GM10248 (cell line): ENCODE measurements at regions of chr17 and their contacts with region 1.

Region 1: DNA sequence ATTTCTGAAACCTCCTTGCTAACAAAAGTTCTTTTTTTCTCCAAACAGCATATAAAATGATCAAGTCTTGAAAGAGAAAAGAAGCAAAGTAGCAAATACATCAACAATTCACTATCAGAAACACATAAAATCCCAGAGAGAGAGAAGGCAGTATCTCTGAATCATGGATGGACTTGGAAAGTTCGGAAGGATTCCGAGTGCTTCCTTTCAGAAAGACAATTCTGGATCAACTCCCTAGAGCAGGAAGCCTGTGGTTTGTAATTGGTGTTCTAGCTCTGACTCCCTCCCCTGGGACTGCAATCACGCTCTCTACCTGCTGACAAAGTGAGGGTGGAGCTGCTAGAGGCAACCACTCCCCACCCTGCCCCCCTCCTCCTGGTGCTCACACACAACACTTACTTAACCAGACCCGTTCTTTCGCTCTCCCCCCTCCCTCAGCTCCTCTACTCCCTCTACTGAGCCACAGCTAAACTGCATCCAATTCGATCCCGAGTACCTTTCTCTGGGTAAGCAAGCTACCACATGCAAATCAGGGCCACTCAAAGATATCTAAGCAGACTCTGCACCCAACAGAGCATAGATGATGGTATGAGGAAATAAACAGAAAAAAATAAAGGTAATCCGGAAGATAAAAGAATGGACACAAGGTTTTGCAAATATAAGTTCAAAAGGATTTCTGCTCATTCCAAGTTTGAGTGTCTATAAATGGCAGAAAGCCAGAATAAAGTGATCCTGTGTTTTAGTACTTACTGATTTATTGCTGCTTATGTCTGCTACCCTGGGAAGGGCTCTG is at the start of gene RNF43:
- DNase-seq: peak; percentile 92
- CTCF ChIP-seq: peak; percentile 79

Region 2: GRCh38 chr17:58317421-58318064 is 100.0 kb before region 1 on chr17:
- CTCF ChIA-PET with region 1: interaction called, 93 read pairs
- POLR2A ChIA-PET with region 1: interaction called, 4 read pairs
- DNase-seq: peak; percentile 79
- CTCF ChIP-seq: peak; percentile 77

Region 3: DNA sequence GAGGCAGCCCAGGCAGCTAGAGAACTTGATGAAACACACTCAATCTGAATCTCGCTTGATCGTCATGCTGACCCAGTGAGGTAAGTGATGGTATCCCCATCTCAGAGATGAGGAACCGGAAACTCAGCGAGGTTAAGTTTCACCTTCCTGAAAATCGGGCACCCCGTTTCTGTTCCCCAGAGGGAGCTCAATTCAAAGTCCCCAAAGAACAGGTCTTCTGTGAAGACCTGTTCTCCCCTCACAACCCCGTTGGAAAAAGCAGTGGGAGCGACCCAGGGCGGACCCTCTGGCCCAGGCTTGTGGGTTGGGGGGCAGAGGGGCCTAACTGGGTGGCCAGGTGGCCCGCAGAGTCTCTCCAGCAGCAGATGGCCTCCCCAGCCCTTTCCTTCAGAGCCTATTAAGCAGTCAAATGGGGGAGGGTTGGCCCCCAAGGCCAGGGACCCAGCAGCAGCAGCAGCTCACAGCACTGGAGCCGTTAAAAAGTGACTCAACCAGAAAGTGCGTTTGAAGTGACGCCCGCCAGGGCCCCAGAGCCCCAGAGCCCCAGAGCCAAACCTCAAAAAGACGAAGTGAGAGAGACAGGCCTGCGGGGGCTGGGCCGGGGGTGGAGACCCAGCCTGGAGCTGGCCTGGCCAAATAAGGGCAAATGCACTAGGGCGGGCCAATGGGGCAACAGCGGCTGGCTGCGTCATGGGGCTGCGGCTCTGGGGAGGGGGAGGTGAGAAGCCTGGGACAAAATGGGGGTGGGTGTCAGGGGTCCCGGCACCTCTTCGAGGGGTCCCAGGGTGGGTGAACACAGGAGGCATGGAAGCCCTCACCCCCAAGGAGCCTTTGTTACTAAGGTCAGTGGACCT is 79.7 kb before region 1 on chr17:
- CTCF ChIA-PET with region 1: interaction called, 11 read pairs
- POLR2A ChIA-PET with region 1: interaction called, 8 read pairs
- DNase-seq: peak; percentile 82
- CTCF ChIP-seq: no peak

Region 4: GRCh38 chr17:58369214-58370031 is 48.1 kb before region 1 on chr17:
- CTCF ChIA-PET with region 1: interaction called, 16 read pairs
- POLR2A ChIA-PET with region 1: interaction called, 4 read pairs
- DNase-seq: peak; percentile 48
- CTCF ChIP-seq: no peak

Region 5: GRCh38 chr17:58388302-58389168 is 29.0 kb before region 1 on chr17:
- CTCF ChIA-PET with region 1: interaction called, 15 read pairs
- POLR2A ChIA-PET with region 1: no interaction called
- DNase-seq: no peak
- CTCF ChIP-seq: no peak

Region 6: GRCh38 chr17:58427807-58428206 is 10.3 kb after region 1 on chr17:
- CTCF ChIA-PET with region 1: interaction called, 31 read pairs
- POLR2A ChIA-PET with region 1: no interaction called
- DNase-seq: no peak
- CTCF ChIP-seq: no peak

Region 7: DNA sequence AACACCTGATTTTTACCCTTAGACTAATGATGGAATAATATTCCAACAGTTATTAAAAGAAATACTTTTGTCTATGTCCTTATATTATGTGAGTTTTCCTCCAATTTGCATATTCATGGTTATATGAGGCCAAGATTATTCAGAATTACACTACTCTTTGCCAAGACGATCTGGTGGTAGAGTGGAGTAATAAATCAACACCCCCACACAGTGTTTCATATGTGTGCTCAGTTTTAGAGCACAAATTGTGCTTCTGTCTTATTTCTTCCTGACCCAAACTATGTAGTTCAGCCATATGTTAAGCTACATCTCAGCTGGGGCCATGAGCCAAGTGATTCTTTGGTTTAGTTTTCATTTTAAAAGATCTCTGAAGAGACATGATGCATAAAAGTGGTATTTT is 311.3 kb after region 1 on chr17:
- CTCF ChIA-PET with region 1: no interaction called
- POLR2A ChIA-PET with region 1: no interaction called
- DNase-seq: no peak
- CTCF ChIP-seq: no peak